ENCODE measurements at regions of chr17 and their contacts with region 1.

Region 1: DNA sequence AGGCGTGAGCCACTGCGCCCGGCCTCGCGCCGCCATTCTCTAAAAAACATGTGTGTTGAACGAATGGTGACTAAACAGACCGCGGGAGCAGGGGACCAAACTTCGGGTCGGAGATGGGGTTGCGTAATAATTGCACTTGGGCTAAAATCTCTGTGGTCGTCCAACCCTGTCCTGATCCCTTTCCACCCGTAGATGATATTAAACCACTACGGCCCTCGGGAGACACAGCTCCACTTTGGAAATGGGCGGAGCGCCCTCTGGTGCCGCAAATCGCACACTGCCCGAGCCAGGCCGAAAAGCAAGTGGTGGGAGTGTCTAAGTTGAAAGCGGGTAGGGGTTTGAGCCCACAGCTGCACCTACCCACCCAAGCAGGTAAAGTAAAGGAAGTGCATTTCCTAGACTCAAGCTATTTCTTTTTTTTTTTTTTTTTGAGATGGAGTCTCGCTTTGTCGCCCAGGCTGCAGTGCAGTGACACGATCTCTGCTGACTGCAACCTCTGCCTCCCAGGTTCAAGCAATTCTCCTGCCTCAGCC is 17.0 kb downstream of the CAVIN1 start:
- DNase-seq: no peak
- H3K4me3 ChIP-seq: no peak overlapping the region
- H3K27ac ChIP-seq: peak overlapping the region; percentile 90
- H3K4me1 ChIP-seq: peaks cover 75% of the 10 kb centered on the region
- H3K27me3 ChIP-seq: no peaks in the 10 kb centered on the region
- CTCF ChIP-seq: peak; percentile 78 to 82 (median 81)
- POLR2A ChIP-seq: no peak

Region 2: GRCh38 chr17:42322382-42323267 is 83.4 kb before region 1 on chr17:
- intact Hi-C with region 1: loop called (anchors 5 kb)
- DNase-seq: no peak
- H3K4me3 ChIP-seq: no peak overlapping the region
- H3K27ac ChIP-seq: peak overlapping the region; percentile 22
- H3K4me1 ChIP-seq: peaks cover 13% of the 10 kb centered on the region
- H3K27me3 ChIP-seq: no peaks in the 10 kb centered on the region
- CTCF ChIP-seq: peak; percentile 99 to 100 (median 100)
- POLR2A ChIP-seq: no peak